ENCODE measurements at regions of chr3 and their contacts with region 1.

Region 1: DNA sequence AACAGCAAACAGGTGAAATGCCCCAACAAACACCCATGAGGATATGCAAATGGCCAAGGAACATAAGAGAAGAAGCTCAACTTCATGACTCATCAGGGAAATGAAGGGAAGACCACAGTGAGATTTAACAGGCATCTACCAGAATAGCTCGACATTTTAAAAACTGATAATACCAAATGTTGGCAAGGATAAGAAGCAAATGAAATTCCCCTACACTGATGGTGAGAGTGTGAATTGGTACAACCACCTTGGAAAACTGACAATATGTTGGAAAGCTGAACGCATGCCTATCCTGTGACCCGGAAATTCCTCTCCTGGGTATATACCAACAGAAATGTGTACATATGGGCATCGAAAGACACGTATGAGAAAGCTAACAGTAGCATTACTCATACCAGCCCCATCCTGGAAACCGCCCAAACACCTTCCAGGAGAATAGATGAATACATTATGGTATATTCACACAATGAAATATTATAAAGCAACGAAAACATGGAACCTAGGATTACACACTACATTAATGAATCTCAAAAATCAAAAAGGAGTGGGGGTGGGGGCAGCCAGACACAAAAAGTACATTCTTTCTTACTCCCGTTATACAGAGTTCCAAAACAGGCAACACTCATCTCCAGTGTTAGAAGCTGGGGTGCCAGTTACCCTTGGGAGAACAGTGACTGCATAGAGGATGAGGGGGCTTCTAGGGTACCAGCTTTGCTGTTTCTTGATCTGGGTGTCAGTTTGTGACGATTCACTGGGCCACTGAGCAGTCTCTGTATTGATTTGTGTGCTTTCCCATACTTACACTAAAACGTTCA is 16.9 kb downstream of the RFTN1 start:
- DNase-seq: no peak
- ATAC-seq: peak; percentile 79
- H3K4me3 Mint-ChIP-seq: peak overlapping the region; percentile 59
- H3K27ac Mint-ChIP-seq: peak overlapping the region; percentile 38
- H3K4me1 Mint-ChIP-seq: peaks cover 66% of the 10 kb centered on the region
- H3K27me3 Mint-ChIP-seq: no peaks in the 10 kb centered on the region
- CTCF ChIP-seq: no peak

Region 2: DNA sequence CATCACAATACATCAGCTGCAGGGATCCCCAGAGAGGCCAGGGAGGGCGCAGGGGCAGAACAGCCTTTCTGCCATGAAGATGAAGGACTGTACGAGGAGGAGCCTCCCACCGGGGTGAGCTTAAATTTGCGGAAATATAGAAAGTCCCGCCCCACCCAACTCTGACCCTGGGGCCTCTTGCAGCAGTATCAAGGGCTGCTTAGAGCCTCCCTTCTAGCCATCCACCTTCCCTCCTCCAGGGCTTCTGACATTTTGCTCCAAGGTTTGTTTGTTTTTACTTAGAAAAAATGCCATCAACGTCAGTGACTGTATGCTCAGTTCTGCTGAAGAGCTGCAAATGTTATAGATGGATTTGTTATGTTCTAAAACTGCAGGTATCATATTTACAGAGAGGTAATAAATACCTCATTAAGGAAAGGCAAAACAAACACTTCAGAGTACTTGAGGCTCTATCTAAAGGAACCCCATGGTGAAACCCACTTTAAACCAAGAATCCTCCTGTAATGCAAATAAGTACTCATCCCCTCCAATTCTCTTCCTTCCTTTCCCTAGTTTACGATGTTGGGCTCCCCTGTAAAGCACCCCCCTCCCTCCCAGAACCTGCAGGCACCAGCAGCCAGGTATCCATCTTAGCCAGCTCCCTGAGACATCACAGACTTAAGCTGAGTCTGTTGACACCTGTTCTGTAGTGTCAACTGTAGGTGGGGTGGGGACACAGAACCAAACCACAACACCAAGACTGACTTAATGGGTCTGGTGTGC is 13.7 kb before region 1 on chr3:
- CTCF ChIA-PET with region 1: interaction called, 5 read pairs
- POLR2A ChIA-PET with region 1: interaction called, 24 read pairs
- intact Hi-C with region 1: loop called (anchors 2 kb)
- DNase-seq: peak; percentile 45
- ATAC-seq: peak; percentile 94
- H3K4me3 Mint-ChIP-seq: peak overlapping the region; percentile 68
- H3K27ac Mint-ChIP-seq: peak overlapping the region; percentile 78
- H3K4me1 Mint-ChIP-seq: peaks cover 86% of the 10 kb centered on the region
- H3K27me3 Mint-ChIP-seq: no peaks in the 10 kb centered on the region
- CTCF ChIP-seq: no peak

Region 3: DNA sequence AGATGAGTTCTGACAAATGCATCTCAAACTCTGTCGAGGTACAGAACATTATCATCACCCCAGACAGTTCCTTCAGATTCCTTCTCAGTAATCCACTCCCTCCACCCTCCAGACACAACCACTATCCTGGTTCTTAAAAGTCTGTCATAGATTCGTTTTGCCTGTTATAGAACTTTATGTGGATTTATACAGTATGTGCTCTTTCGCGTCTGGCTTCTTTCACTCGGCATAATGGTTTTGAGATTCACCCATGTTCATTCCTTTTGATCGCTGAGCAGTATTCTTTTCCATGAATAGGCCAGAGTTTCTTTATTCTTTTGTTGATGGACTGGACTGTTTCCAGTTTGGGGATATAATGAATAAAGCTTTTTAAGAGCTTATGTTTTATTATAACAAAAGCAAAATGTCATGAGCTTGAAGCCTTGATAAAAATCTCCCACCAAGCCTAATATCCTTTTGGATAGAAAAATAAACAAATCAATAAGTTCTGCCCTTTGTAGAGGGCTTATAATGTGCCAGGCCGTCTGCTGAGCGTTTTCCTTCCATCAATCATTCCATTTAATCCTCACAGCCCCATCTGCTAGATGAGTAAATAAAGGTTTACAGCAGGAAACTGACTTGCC is 38.1 kb after region 1 on chr3:
- CTCF ChIA-PET with region 1: no interaction called
- POLR2A ChIA-PET with region 1: no interaction called
- intact Hi-C with region 1: loop called (anchors 5 kb)
- DNase-seq: no peak
- ATAC-seq: no peak
- H3K4me3 Mint-ChIP-seq: no peak overlapping the region
- H3K27ac Mint-ChIP-seq: no peak overlapping the region
- H3K4me1 Mint-ChIP-seq: peaks cover 9% of the 10 kb centered on the region
- H3K27me3 Mint-ChIP-seq: no peaks in the 10 kb centered on the region
- CTCF ChIP-seq: no peak

Measured in activated B cell treated with CpG ODN at 0.5 μM for 24 hours (primary cell).